Gastrocnemius medialis (tissue), 4 donors: ENCODE measurements at regions of chr3 and their contacts with region 1.

Region 1: DNA sequence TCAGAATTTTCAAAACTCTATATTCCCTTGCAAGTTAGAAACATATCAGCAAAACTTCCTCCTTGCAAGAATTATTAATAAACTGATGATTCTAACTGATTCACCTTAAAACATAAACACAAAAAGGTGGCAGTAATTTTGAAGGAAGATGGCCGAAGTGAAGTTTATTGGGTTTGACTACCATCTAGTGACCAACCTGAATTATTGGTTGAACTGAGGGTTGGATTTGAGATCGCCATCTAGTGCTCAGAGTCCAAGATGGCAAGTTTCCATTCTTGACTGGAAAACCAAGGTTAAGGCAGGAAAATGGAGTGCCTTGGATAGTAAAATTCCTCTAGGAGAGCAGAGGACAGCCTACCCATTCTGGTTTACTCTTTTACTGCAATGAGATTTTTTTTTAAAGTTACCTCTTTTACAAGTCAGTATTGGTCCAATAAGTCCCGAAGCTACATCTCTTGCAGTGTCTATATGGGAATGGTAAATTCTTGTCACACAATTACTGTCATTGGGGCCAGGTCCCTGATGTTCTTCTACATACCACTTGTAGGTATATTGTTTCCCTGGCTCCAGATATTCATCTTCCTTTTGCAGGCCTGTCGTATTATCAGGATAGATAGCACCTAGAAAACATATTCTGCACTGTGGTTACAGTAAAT is 51.6 kb upstream of the CP start:
- DNase-seq: peak in 1 of 2 donors; percentile 20
- ATAC-seq: peak; percentile 95 to 96
- H3K4me3 ChIP-seq: no peak overlapping the region
- H3K27ac ChIP-seq: peak overlapping the region in 2 of 4 donors; percentile 23 to 51
- H3K4me1 ChIP-seq: peaks cover 0 to 5% of the 10 kb centered on the region in 2 donors
- H3K27me3 ChIP-seq: no peaks in the 10 kb centered on the region
- CTCF ChIP-seq: peak; percentile 77 to 96 (median 89)
- POLR2A ChIP-seq: no peak

Region 2: GRCh38 chr3:148861277-148861869 is 411.9 kb before region 1 on chr3:
- in situ Hi-C with region 1: loop called in 2 of 4 experiments (anchors 10 kb)
- intact Hi-C with region 1: loop called (anchors 1 kb)
- DNase-seq: no peak
- ATAC-seq: peak; percentile 72 to 78
- H3K4me3 ChIP-seq: no peak overlapping the region
- H3K27ac ChIP-seq: no peak overlapping the region
- H3K4me1 ChIP-seq: peaks cover 5% of the 10 kb centered on the region in 2 donors
- H3K27me3 ChIP-seq: no peaks in the 10 kb centered on the region
- CTCF ChIP-seq: peak; percentile 63 to 83 (median 78)
- POLR2A ChIP-seq: no peak

Region 3: GRCh38 chr3:149016669-149017541 is 256.3 kb before region 1 on chr3:
- in situ Hi-C with region 1: no loop called
- intact Hi-C with region 1: no loop called
- DNase-seq: peak in 1 of 2 donors; percentile 45
- ATAC-seq: peak; percentile 73 to 76
- H3K4me3 ChIP-seq: peak overlapping the region in 1 of 4 donors; percentile 5
- H3K27ac ChIP-seq: peak overlapping the region; percentile 98 to 100 (median 100)
- H3K4me1 ChIP-seq: peaks cover 85 to 88% of the 10 kb centered on the region in 2 donors
- H3K27me3 ChIP-seq: no peaks in the 10 kb centered on the region
- CTCF ChIP-seq: no peak
- POLR2A ChIP-seq: peak in 1 of 2 donors; percentile 67

Region 4: GRCh38 chr3:149114458-149114857 is 158.8 kb before region 1 on chr3:
- in situ Hi-C with region 1: loop called in 2 of 4 experiments (anchors 5 kb)
- intact Hi-C with region 1: no loop called
- DNase-seq: no peak
- ATAC-seq: no peak
- H3K4me3 ChIP-seq: no peak overlapping the region
- H3K27ac ChIP-seq: no peak overlapping the region
- H3K4me1 ChIP-seq: no peaks in the 10 kb centered on the region
- H3K27me3 ChIP-seq: no peaks in the 10 kb centered on the region
- CTCF ChIP-seq: no peak
- POLR2A ChIP-seq: no peak